PC-3 (cell line): ENCODE measurements at regions of chr4 and their contacts with region 1.

Region 1: DNA sequence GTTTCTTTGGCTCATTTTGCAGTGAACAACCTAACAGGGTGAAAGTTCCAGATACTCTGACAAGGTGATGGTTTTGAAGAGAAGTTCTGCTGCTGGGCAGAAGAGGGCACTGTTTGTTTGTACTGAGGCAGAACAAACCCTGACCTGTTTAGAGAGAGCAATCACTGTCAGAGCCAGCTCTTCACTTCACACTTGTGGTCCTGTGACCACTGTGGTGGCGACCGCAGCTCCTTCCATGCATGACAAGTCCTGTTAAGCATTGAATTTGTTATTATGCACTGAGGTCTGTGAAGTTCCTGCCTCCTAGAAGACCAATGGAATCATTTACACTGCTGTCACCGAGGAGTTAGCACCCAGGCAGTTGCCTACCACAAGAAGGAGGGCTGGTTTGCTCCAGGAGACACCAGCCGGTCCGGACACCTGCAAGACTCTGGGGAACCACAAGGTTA is 86.6 kb downstream of the ZNF330 start:
- DNase-seq: peak; percentile 77
- ATAC-seq: peak; percentile 98
- H3K4me3 ChIP-seq: no peak overlapping the region
- H3K27ac ChIP-seq: no peak overlapping the region
- H3K4me1 ChIP-seq: peaks cover 4% of the 10 kb centered on the region; the same call in 1 of the 2 replicates
- H3K27me3 ChIP-seq: no peaks in the 10 kb centered on the region
- CTCF ChIP-seq: peak; percentile 75

Region 2: GRCh38 chr4:140993370-140993769 is 313.9 kb before region 1 on chr4:
- CTCF ChIA-PET with region 1: no interaction called
- POLR2A ChIA-PET with region 1: no interaction called
- intact Hi-C with region 1: no loop called
- DNase-seq: no peak
- ATAC-seq: no peak
- H3K4me3 ChIP-seq: no peak overlapping the region
- H3K27ac ChIP-seq: no peak overlapping the region
- H3K4me1 ChIP-seq: no peaks in the 10 kb centered on the region
- H3K27me3 ChIP-seq: peaks cover 12% of the 10 kb centered on the region; the same call in 1 of the 2 replicates
- CTCF ChIP-seq: no peak

Region 3: DNA sequence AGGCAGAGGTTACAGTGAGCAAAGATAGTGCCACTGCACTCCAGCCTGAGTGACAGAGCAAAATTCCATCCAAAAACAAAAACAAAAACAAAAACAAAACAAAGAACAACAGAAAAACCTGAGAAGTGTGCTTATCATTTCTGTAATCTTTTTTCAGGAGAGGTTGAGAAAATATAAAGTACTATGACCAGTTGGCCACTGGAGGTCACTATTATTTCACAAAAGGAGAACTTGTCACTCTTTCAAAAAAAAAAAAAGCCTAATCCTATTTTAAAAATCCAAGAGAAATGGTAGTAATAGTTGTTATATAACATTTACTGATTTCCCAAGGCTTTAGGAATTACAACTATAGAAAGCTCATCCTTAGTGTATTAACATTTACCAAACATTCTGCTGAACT is 149.0 kb before region 1 on chr4:
- CTCF ChIA-PET with region 1: no interaction called
- POLR2A ChIA-PET with region 1: no interaction called
- intact Hi-C with region 1: loop called (anchors 5 kb)
- DNase-seq: peak; percentile 51
- ATAC-seq: no peak
- H3K4me3 ChIP-seq: no peak overlapping the region
- H3K27ac ChIP-seq: no peak overlapping the region
- H3K4me1 ChIP-seq: no peaks in the 10 kb centered on the region
- H3K27me3 ChIP-seq: no peaks in the 10 kb centered on the region
- CTCF ChIP-seq: peak; percentile 77

Region 4: GRCh38 chr4:141329174-141329569 is 21.9 kb after region 1 on chr4:
- CTCF ChIA-PET with region 1: no interaction called
- POLR2A ChIA-PET with region 1: no interaction called
- intact Hi-C with region 1: loop called (anchors 2 kb)
- DNase-seq: peak; percentile 95
- ATAC-seq: peak; percentile 94
- H3K4me3 ChIP-seq: peak overlapping the region; percentile 36; the same call in 1 of the 2 replicates
- H3K27ac ChIP-seq: peak overlapping the region; percentile 89
- H3K4me1 ChIP-seq: peaks cover 38% of the 10 kb centered on the region
- H3K27me3 ChIP-seq: no peaks in the 10 kb centered on the region
- CTCF ChIP-seq: no peak

Region 5: GRCh38 chr4:141711014-141711610 is 403.8 kb after region 1 on chr4:
- CTCF ChIA-PET with region 1: no interaction called
- POLR2A ChIA-PET with region 1: no interaction called
- intact Hi-C with region 1: loop called (anchors 2 kb)
- DNase-seq: peak; percentile 61
- ATAC-seq: peak; percentile 50
- H3K4me3 ChIP-seq: no peak overlapping the region
- H3K27ac ChIP-seq: no peak overlapping the region
- H3K4me1 ChIP-seq: peaks cover 24% of the 10 kb centered on the region
- H3K27me3 ChIP-seq: no peaks in the 10 kb centered on the region
- CTCF ChIP-seq: peak; percentile 76